Gastrocnemius medialis (tissue), 4 donors: ENCODE measurements at regions of chr11 and their contacts with region 1.

Region 1: DNA sequence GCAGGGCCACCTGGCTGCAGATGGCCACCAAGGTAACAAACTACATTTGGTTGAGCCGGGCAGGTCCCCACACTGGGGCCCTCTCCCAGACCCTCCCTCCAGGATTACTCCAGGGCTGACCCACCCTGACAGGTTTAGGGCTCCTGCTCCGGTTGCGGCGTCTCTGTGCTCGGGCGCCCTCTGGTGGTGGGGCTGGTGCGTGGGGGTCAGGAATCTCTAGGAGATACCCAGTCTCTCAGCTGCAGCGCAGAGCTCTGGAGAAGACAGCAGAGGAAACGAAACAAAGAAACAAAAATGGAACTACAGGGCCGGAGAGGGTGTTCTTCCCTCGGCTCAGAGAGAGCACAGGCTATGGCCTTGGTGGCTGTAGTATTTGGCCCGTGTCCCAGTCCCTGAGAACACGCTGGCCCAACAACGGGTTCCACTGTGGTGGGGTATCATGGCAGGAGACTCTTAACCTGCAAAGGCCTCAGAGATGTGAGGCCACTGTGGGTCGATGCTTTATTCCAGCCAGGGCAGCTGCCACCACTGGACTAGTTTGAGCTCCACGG is 2.4 kb downstream of the C11orf96 start:
- DNase-seq: peak; percentile 46 to 71
- ATAC-seq: peak; percentile 61 to 63
- H3K4me3 ChIP-seq: peak overlapping the region; percentile 61 to 69 (median 67)
- H3K27ac ChIP-seq: peak overlapping the region; percentile 67 to 83 (median 82)
- H3K4me1 ChIP-seq: peaks cover 14 to 15% of the 10 kb centered on the region in 2 donors
- H3K27me3 ChIP-seq: peaks cover 0 to 14% (median 11%) of the 10 kb centered on the region in 3 donors
- CTCF ChIP-seq: peak; percentile 86 to 96 (median 91)
- POLR2A ChIP-seq: no peak

Region 2: GRCh38 chr11:43895601-43896000 is 49.2 kb before region 1 on chr11:
- in situ Hi-C with region 1: loop called (anchors 5 to 10 kb)
- intact Hi-C with region 1: loop called (anchors 1 kb)
- DNase-seq: no peak
- ATAC-seq: no peak
- H3K4me3 ChIP-seq: no peak overlapping the region
- H3K27ac ChIP-seq: no peak overlapping the region
- H3K4me1 ChIP-seq: no peaks in the 10 kb centered on the region
- H3K27me3 ChIP-seq: no peaks in the 10 kb centered on the region
- CTCF ChIP-seq: no peak
- POLR2A ChIP-seq: no peak

Region 3: DNA sequence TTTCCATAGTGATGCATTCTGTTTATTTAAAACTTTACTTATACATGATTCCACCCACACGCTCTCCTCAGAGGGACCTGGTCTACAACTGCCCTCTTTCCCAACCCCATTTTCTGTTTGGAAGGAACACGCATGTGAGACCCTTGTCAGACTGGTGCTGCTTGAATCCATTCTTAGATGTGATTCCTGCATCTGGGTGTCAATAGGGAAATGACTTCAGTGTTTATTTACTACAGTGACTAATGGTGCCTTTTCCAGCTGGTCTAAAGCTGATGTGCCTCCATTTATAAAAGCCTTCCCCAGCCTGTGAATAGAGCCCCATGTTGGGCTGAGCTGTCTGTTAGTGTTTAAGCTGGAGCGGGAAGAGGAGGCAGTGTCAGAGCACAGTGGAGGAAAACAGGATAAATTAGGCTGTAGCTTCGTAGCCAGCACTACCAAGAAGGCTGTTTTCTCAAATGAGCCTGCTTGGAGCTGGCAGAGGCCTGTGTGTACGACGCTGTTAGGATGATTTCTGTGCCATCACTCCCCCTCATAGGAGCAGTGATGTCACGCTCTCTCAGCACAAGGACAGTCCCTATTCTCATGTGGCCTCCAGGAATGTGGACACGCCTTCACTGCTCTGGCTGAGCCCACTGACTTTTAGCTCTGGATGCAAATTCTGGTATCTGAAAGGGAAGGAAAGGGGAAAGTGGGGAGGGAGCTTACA is 21.3 kb before region 1 on chr11:
- in situ Hi-C with region 1: no loop called
- intact Hi-C with region 1: loop called (anchors 2 kb)
- DNase-seq: peak; percentile 40 to 72
- ATAC-seq: peak; percentile 18 to 23
- H3K4me3 ChIP-seq: no peak overlapping the region
- H3K27ac ChIP-seq: peak overlapping the region; percentile 71 to 93 (median 86)
- H3K4me1 ChIP-seq: peaks cover 26 to 27% of the 10 kb centered on the region in 2 donors
- H3K27me3 ChIP-seq: no peaks in the 10 kb centered on the region
- CTCF ChIP-seq: no peak
- POLR2A ChIP-seq: peak; percentile 16 to 38

Region 4: GRCh38 chr11:43979571-43980190 is 34.8 kb after region 1 on chr11:
- in situ Hi-C with region 1: no loop called
- intact Hi-C with region 1: no loop called
- DNase-seq: no peak
- ATAC-seq: no peak
- H3K4me3 ChIP-seq: no peak overlapping the region
- H3K27ac ChIP-seq: no peak overlapping the region
- H3K4me1 ChIP-seq: peaks cover 2 to 10% of the 10 kb centered on the region in 2 donors
- H3K27me3 ChIP-seq: no peaks in the 10 kb centered on the region
- CTCF ChIP-seq: no peak
- POLR2A ChIP-seq: no peak

Region 5: DNA sequence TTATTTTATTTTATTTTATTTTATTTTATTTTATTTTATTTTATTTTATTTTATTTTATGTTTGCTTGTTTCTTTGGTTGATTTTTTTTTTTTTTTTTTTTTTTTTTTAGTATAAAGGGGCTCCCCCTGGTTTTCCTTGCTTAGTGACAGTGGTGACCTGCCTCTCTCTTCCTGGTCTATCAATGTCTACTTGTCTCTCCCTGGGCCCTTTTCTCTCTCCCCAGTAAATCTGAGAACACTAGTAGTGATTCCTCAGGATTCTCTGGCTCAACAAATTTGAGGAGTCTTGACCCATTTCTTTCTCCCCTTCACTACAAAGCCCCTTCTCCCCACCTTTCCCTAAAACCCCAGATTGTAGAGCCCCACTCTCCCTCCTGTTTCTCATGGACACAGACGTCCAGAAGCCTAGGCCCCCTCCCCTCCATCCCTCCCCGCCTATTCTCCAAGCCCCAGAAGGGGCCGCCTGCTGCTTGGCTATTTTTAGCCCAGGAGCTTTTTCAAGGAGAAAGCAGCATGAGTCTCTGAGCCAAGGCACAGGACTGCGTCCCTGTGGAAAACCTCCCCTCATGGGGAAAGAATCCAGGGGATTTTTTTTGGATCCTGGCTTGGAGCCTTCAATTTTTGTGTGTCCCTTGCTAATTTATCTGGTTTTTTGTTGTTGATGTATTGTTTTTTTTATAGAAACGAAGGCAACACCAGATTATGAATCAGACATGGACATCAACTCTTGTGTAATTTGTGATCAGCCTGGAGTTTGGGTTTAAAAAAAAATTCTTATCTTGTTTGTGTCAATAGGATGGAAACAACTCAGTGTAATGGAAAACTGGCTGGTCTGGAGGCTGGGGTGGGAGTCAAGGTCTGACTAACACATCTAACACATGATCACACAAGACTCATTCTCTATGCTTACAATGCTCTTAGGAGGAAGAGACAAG is 85.4 kb after region 1 on chr11:
- in situ Hi-C with region 1: loop called in 1 of 4 experiments (anchors 10 kb)
- intact Hi-C with region 1: loop called (anchors 5 kb)
- DNase-seq: peak in 1 of 2 donors; percentile 40
- ATAC-seq: peak; percentile 51 to 72
- H3K4me3 ChIP-seq: no peak overlapping the region
- H3K27ac ChIP-seq: peak overlapping the region; percentile 48 to 75 (median 66)
- H3K4me1 ChIP-seq: peaks cover 5 to 14% of the 10 kb centered on the region in 2 donors
- H3K27me3 ChIP-seq: peaks cover 0 to 6% (median 5%) of the 10 kb centered on the region in 3 donors
- CTCF ChIP-seq: no peak
- POLR2A ChIP-seq: no peak